ENCODE measurements at regions of chr9 and their contacts with region 1.

Region 1: DNA sequence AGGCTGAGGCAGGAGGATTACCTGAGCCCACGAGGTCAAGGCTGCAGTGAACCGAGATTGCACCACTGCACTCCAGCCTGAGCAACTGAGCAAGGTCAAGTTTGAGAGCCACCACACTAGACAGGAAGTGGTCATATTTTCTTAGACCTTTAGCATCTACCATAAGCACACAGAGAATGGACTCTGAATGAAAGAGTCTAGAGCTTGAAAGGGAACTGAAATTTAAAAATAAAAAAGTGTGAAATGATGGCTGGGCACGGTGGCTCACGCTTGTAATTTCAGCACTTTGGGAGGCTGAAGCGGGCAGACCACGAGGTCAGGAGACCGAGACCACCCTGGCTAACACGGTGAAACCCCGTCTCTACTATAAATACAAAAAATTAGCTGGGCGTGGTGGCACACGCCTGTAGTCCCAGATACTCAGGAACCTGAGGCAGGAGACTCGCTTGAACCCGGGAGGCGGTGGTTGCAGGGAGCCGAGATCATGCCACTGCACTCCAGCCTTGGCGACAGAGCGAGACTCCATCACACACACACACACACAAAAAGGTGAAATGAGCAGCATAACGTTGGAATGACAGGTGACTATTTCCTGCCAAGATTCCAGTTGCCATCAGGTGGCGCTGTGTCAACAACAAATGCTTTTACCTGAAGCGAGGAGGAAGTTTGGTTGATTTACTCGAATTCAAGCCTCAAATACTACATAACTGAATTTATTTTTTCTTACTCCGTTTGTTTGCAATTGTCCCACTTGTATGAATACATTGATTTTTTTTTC is 21.3 kb upstream of the AK3 start:
- DNase-seq: peak; percentile 64
- ATAC-seq: peak; percentile 50 to 54

Region 2: DNA sequence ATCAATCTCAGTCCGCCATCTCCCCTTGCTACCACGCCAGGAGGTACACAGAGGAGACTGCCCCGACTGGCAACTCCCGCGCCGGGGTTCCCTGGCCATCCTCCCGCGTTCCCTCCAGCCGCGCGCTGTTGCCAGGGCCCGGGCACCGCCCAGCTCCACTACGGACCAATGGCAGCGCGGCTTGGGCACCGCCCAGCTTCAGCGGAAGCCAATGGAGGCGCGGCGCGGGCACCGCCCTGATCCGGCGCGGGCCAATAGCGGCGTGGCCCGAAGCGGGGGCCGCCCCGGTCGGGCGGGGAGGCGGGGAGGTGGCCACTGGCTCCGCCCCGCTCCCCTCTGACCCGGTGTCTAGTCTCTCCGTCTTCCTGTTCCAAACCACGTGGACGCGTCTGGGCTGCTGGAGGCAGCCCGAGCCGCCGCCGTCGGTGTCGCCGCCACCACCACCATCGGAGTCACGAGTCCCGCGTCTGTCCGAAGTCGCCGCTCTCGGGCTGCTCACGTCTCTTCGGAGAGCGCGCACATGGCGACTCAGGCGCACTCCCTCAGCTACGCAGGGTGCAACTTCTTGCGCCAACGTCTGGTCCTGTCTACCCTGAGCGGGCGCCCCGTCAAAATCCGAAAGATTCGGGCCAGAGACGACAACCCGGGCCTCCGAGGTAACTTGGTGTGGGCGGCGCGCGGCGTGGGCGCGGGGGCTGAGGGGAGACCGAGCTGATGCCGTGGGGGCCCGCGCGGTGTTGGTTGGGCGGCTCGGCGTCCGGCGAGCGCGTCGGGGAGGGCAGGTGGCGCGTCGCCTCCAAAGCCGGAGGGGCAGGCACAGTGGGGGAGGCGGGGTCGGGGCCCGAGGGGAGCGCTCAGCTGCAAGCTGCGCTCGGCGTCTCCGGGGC is 30.5 kb after region 1 on chr9 and contains the start of gene RCL1:
- intact Hi-C with region 1: loop called in 1 of 2 experiments (anchors 5 kb)
- DNase-seq: peak; percentile 96
- ATAC-seq: peak; percentile 99 to 100
- total RNA-seq, gene RCL1: 6.0 to 10.1 TPM

Region 3: GRCh38 chr9:4984621-4985385 is 222.5 kb after region 1 on chr9 and contains the start of gene JAK2:
- intact Hi-C with region 1: loop called (anchors 5 kb)
- DNase-seq: peak; percentile 94
- ATAC-seq: peak; percentile 92 to 98
- total RNA-seq, gene JAK2: 11.4 to 11.8 TPM

Region 4: GRCh38 chr9:5593904-5594303 is 831.6 kb after region 1 on chr9:
- intact Hi-C with region 1: loop called in 1 of 2 experiments (anchors 5 kb)
- DNase-seq: no peak
- ATAC-seq: no peak